Left ventricle myocardium inferior (tissue), 1 donor: ENCODE measurements at regions of chrX and their contacts with region 1.

Region 1: DNA sequence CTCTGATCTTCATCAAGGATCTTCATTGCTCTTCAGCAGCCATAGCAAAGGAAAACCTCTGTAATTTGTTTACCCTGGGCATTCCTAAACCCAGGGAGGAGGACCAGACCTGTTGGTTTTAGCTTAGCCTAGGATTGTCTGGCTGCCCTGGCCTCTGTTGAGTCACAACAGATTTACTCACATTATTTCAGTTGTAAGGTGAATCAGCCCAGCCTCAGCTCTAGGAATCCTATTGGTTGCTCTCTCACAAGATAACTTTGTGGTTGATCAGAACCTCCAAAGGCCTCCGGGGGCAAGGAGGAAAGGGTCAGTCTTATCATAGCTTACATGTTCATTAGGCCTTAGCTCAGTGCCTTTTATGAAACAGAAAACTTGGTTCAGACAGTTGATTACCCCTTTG is 41.0 kb downstream of the PDK3 start:
- DNase-seq: no peak
- H3K4me3 ChIP-seq: no peak overlapping the region
- H3K27ac ChIP-seq: no peak overlapping the region
- H3K4me1 ChIP-seq: no peaks in the 10 kb centered on the region
- H3K27me3 ChIP-seq: no peaks in the 10 kb centered on the region
- CTCF ChIP-seq: no peak

Region 2: GRCh38 chrX:24395775-24396174 is 110.3 kb before region 1 on chrX:
- intact Hi-C with region 1: loop called (anchors 10 kb)
- DNase-seq: no peak
- H3K4me3 ChIP-seq: no peak overlapping the region
- H3K27ac ChIP-seq: peak overlapping the region; percentile 40
- H3K4me1 ChIP-seq: peaks cover 7% of the 10 kb centered on the region
- H3K27me3 ChIP-seq: no peaks in the 10 kb centered on the region
- CTCF ChIP-seq: peak; percentile 73